H1 (cell line): ENCODE measurements at regions of chr16 and their contacts with region 1.

Region 1: DNA sequence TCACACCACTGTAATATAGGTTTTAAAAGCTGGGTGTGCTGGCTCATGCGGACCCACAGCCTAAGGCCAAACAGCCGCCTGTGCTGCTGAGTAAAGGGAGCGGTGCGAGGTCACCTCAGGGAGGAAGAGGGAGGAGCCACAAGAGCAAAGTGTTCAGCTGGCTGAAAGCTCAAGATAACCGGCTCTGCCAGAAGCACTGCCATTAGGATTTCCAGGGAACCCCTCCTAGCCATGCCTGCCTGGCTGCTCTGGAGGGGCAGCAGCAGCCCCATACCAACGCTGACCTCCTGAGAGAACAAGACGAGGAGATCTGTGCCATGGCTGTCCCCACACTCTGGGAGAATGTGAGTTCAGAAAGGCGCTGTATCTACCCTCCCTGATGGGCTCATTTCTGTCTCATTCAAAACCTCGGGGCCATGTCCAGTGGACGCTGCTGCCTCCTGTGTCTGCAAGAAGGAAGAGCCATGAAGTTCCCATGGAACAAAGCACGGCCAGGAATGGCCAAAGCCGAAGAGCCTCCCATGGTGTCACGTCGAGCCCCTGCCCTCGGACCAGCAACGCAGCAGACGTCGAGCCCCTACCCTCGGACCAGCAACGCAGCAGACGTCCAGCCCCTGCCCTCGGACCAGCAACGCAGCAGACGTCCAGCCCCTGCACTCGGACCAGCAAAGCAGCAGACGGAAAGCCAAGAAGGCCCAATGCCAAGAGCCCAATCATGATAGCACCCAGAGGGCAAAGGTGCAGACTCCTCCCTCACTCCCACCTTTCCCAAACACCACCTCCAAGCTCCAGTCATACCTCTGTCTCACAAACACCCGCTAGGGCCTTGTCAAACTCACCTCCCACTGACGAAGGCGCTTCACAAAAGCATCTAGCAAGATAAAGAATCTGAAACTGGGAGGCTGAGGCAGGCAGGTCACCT is 107.0 kb downstream of the ANKRD11 start:
- DNase-seq: no peak
- H3K4me3 ChIP-seq: no peak overlapping the region
- H3K27ac ChIP-seq: peak overlapping the region; percentile 32; the same call in 1 of the 2 replicates
- H3K4me1 ChIP-seq: peaks cover 2 to 28% (median 13%) of the 10 kb centered on the region in 4 experiments
- H3K27me3 ChIP-seq: no peaks in the 10 kb centered on the region
- CTCF ChIP-seq: peak in 1 of 3 experiments; percentile 23; a peak in 1 of 4 replicates
- EP300 ChIP-seq: no peak
- POLR2A ChIP-seq: no peak
- RAD21 ChIP-seq: peak in 1 of 2 experiments; percentile 28; a peak in 1 of 4 replicates

Region 2: GRCh38 chr16:89319883-89320781 is 63.2 kb before region 1 on chr16:
- CTCF ChIA-PET with region 1: interaction called, 10 read pairs
- POLR2A ChIA-PET with region 1: no interaction called
- DNase-seq: no peak
- H3K4me3 ChIP-seq: no peak overlapping the region
- H3K27ac ChIP-seq: 0 out of 2 replicates have a peak overlapping the region, but pooled peaks have one; percentile 4
- H3K4me1 ChIP-seq: peaks cover 13 to 66% (median 45%) of the 10 kb centered on the region in 4 experiments
- H3K27me3 ChIP-seq: no peaks in the 10 kb centered on the region
- CTCF ChIP-seq: no peak
- EP300 ChIP-seq: no peak
- POLR2A ChIP-seq: no peak
- RAD21 ChIP-seq: no peak